ENCODE measurements at regions of chr2 and their contacts with region 1.

Region 1: DNA sequence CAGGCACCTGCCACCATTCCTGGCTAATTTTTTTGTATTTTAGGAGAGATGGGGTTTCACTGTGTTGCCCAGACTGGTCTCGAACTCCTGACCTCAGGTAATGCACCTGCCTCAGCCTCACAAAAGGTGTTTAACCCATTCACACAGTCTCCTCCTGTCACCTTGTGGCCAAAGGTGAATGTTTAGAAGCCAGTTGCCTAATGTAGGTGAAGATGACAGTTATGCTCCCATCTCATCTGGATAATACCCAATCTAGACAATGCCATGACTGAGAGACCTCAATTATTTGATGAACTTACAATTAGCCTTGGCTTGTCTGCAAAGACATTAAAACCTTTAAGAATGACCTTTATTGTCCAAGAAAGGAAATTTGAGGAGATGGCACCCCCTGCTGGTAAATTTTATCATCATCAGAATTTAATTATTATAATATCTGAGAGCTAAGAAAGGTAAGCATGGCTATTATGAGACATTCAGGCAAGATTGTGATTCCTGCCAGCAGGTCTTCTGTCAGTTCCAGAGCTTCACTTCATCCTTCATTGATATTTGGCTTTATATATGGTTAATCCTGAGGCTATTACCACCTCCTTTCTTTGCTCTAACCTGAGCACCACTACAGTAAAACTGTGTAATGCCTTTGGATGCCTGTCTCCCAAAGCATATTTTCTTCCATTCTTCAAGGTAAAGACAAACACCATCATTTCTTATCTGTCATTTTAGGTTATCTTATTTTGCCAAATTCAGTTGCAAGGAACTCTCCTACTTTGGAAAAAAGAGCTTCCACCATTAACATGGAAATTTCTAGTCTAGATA is 117.6 kb downstream of the FAM124B start:
- DNase-seq: peak; percentile 33
- H3K27ac ChIP-seq: no peak overlapping the region
- CTCF ChIP-seq: peak; percentile 84

Region 2: DNA sequence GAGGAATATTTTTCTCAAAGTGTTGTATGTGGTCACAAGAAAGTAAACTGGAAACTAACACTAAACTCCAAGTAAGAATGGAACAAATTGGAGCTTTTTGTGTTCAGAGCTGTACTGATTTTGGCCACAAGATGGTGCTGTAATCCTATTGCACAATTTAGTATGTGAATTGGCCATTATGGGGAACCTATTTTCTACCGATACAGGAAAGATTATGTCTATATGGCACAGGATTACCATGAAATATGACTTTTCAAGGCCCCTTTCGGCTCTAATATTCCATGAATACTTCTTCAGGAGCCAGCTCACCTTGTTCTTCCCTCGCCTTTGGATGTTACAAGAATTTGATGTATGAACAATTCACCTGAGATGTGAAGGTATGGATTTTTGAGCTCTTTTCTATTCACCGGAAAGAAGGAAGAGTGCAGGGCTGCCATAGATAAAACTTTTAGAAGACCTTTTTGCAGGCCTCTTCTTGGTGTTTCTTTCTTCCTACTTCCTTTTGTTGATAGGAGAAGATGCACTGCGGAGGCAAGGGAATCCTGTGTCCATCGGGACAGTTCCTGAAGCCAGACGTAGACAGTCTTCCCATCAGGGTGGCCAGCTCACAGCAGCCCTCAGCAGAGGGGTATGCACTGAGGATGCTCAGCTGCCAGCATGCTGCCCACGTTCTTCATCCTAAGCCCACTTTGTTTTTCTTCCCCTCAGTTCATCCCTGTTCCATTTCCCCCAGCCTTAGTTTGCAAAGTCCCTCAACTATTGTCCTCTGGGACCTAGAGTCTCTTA is 313.8 kb before region 1 on chr2:
- CTCF ChIA-PET with region 1: interaction called, 76 read pairs
- POLR2A ChIA-PET with region 1: no interaction called
- DNase-seq: peak; percentile 32
- H3K27ac ChIP-seq: peak overlapping the region; percentile 37; the same call in 1 of the 2 replicates
- CTCF ChIP-seq: peak; percentile 92

Region 3: GRCh38 chr2:223993621-223994232 is 290.6 kb before region 1 on chr2:
- CTCF ChIA-PET with region 1: interaction called, 87 read pairs
- POLR2A ChIA-PET with region 1: no interaction called
- DNase-seq: peak; percentile 62
- H3K27ac ChIP-seq: no peak overlapping the region
- CTCF ChIP-seq: peak; percentile 75

Region 4: DNA sequence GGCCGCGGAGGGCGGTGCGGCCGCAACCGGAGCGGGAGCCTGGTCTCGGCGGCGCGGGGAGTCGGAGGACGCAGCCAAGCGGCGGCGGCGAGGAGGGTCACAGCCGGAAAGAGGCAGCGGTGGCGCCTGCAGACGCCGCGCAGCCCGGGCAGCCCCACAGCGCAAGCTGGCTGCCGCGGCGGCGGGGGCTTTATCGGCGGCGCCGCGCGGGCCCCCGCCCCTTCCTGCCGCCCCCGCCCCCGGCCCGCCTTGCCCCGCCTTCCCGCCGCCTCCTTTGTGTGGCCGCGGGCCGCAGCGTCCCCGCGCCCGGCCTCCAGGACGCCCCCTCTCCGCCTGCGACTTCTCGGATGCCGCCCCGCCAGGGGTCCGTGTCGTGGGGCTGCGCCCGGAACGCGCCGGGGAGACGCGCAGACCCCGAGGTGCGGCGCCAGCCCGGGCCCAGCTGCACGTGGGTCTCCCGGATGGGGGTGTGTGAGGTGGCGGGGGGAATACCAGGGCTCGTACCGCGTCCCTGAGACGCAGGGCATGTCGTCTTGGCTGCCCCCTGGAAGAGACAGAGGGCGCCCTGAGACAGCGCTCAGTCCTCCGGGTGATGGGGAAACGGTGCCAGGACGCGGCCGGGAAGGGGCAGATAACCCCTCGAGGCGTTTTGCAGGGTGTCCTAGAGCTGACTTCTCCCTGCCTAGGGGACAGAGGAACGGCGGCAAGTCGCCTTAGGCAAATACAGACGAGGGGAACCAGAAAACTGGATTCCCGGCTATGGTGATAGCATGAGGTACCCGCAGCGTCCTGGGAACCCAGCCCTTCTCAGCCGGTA is 245.0 kb before region 1 on chr2 and contains the start of gene SERPINE2:
- CTCF ChIA-PET with region 1: interaction called, 14 read pairs
- POLR2A ChIA-PET with region 1: no interaction called
- DNase-seq: peak; percentile 77
- H3K27ac ChIP-seq: peak within 1 kb of the TSS; percentile 79
- CTCF ChIP-seq: peak; percentile 69